HepG2 (cell line): ENCODE measurements at regions of chr10 and their contacts with region 1.

Region 1: DNA sequence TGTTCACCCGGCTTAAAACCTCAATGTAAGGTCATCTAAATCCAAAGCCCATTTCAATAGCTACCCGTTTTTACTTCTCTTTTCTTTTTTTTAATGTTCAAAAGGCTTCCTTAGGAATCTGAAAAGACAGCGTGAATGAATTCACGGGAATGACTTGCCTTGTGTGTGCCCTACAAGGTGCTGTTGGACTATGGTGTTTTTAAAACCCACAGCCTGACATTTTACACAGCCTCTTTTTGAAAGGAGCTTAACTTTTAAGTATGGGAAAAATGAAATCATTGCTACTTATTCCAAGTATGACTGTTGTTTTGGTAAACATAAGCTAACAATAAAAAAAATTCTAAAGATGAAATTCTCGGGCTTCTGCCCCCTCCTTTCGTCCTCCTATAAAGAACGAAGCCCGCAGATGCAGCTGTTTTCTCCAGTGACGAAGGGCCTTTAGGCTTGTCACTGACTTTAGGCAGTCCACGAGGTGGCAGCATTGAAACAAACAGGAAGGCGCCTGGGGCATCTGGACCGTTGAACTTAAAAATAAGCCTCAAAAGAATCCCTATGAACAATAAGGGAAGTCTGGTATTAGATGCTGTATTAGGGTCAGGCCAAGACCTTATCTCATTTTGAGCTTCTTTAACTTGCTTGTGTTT is 141.3 kb downstream of the NRP1 start:
- DNase-seq: peak; percentile 80
- ATAC-seq: peak; percentile 12; the same call in 1 of the 3 replicates
- H3K4me3 ChIP-seq: no peak overlapping the region
- H3K27ac ChIP-seq: no peak overlapping the region
- H3K4me1 ChIP-seq: peaks cover 53% of the 10 kb centered on the region
- H3K27me3 ChIP-seq: no peaks in the 10 kb centered on the region
- CTCF ChIP-seq: peak; percentile 85
- EP300 ChIP-seq: no peak
- POLR2A ChIP-seq: no peak
- RAD21 ChIP-seq: peak; percentile 73

Region 2: DNA sequence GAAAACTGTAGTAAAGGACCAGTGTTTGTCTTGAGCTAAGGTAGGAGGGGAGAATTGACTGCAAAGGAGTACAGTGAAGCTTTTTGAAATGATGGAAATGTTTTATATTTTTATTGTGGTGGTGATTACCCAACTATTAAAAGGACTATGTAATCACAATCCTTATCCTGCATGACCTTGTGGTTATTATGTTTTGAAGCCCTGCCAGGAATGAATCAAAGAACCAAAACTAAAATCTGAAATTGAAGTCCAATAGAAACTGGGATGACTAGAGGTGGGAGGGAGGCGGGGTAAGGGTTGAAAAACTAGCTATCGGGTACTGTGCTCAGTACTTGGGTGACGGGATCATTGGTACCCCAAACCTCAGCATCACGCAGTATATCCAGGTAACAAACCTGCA is 739.0 kb before region 1 on chr10:
- CTCF ChIA-PET with region 1: no interaction called
- POLR2A ChIA-PET with region 1: no interaction called
- in situ Hi-C with region 1: no loop called
- intact Hi-C with region 1: no loop called
- DNase-seq: no peak
- ATAC-seq: no peak
- H3K4me3 ChIP-seq: no peak overlapping the region
- H3K27ac ChIP-seq: no peak overlapping the region
- H3K4me1 ChIP-seq: no peaks in the 10 kb centered on the region
- H3K27me3 ChIP-seq: no peaks in the 10 kb centered on the region
- CTCF ChIP-seq: no peak
- EP300 ChIP-seq: no peak
- POLR2A ChIP-seq: no peak
- RAD21 ChIP-seq: no peak

Region 3: DNA sequence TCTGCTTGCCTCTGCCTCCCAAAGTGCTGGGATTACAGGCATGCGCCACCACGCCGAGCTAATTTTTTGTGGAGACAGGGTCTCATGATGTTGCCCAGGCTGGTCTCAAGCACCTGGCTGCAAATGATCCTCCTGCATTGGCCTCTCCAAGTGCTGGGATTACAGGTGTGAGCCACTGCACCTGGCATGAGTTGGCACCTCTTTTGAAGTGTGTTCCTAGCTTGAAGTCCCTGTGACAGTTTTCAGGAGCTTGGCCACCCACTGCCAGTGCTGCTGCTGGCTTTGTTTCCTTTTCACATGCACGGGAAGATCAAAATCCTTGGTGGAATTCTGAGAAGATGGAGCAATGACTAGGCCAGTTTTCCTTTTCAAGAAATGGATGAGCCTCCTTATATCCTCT is 15.0 kb after region 1 on chr10:
- CTCF ChIA-PET with region 1: no interaction called
- POLR2A ChIA-PET with region 1: interaction called, 10 read pairs
- in situ Hi-C with region 1: no loop called
- intact Hi-C with region 1: no loop called
- DNase-seq: no peak
- ATAC-seq: no peak
- H3K4me3 ChIP-seq: no peak overlapping the region
- H3K27ac ChIP-seq: no peak overlapping the region
- H3K4me1 ChIP-seq: no peaks in the 10 kb centered on the region
- H3K27me3 ChIP-seq: no peaks in the 10 kb centered on the region
- CTCF ChIP-seq: no peak
- EP300 ChIP-seq: no peak
- POLR2A ChIP-seq: no peak
- RAD21 ChIP-seq: no peak

Region 4: DNA sequence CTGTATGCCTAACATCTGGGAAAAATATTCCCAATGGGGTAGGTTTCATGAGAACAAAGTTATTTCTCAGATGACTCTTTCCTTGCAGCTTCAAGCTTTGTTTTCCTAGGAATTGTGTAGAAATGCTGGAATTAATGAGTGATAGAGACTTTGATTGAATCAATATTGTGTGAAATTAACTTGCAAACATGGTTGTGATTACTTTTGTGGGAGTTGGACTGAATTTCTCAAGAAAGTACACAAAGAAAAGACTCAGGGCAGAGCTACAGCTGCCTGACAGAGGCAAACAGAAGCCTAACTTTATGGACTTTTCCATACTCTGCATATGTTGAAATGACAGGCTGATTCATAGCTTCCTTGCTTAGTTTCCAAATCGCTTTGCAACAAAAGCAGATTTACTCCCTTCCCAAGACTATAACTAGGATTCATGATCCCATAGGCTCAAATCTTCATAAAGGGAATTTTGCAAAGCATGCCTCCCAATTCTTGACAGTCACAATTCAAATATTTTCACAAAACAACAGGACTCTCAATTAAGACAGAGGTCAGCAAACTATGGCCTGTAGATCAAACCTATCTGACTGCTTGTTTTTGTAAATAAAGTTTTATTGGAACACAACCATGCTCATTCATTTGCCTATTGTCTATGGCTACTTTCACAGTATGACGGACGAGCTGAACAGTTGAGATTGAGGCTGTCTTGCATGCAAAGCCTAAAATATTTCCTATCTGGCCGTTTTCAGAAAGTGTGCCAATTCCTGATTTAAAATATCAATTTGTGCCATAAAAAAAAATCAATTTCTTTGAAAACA is 113.7 kb after region 1 on chr10:
- CTCF ChIA-PET with region 1: no interaction called
- POLR2A ChIA-PET with region 1: interaction called, 6 read pairs
- in situ Hi-C with region 1: no loop called
- intact Hi-C with region 1: loop called (anchors 5 kb)
- DNase-seq: peak; percentile 77
- ATAC-seq: peak; percentile 87
- H3K4me3 ChIP-seq: peak overlapping the region in 1 of 3 experiments; percentile 5; a peak in 1 of 6 replicates
- H3K27ac ChIP-seq: peak overlapping the region; percentile 47
- H3K4me1 ChIP-seq: peaks cover 32% of the 10 kb centered on the region
- H3K27me3 ChIP-seq: no peaks in the 10 kb centered on the region
- CTCF ChIP-seq: no peak
- EP300 ChIP-seq: peak in 1 of 2 experiments; percentile 68; a peak in 2 of 4 replicates
- POLR2A ChIP-seq: no peak
- RAD21 ChIP-seq: no peak

Region 5: GRCh38 chr10:33509231-33509831 is 316.2 kb after region 1 on chr10:
- CTCF ChIA-PET with region 1: no interaction called
- POLR2A ChIA-PET with region 1: interaction called, 4 read pairs
- in situ Hi-C with region 1: loop called (anchors 5 kb)
- intact Hi-C with region 1: loop called (anchors 5 kb)
- DNase-seq: peak; percentile 92
- ATAC-seq: peak; percentile 90
- H3K4me3 ChIP-seq: peak overlapping the region; percentile 20 to 55 (median 40); a peak in 5 of 6 replicates
- H3K27ac ChIP-seq: peak overlapping the region; percentile 93
- H3K4me1 ChIP-seq: peaks cover 37% of the 10 kb centered on the region
- H3K27me3 ChIP-seq: no peaks in the 10 kb centered on the region
- CTCF ChIP-seq: no peak
- EP300 ChIP-seq: peak; percentile 85 to 90
- POLR2A ChIP-seq: peak in 1 of 2 experiments; percentile 33; a peak in 1 of 4 replicates
- RAD21 ChIP-seq: no peak

Region 6: DNA sequence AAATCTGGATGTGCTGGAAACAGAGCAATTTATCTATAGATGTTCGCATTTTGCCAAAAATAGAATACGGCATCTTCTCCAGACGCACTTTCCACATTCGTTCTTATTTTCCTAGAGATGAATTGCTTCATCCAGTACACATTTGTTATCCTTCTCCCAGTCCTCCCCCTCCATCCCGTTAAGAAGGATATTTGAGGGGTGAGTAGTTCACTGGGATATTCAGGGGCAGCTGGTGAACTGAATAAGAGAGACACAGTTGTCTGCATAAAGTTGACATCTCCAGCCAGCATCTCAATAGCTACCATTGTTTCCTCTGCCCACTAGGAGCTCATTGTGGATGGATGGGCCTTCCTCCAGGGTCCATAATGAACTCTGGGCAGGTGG is 598.1 kb after region 1 on chr10:
- CTCF ChIA-PET with region 1: no interaction called
- POLR2A ChIA-PET with region 1: no interaction called
- in situ Hi-C with region 1: no loop called
- intact Hi-C with region 1: no loop called
- DNase-seq: peak; percentile 13
- ATAC-seq: no peak
- H3K4me3 ChIP-seq: no peak overlapping the region
- H3K27ac ChIP-seq: no peak overlapping the region
- H3K4me1 ChIP-seq: peaks cover 20% of the 10 kb centered on the region
- H3K27me3 ChIP-seq: no peaks in the 10 kb centered on the region; a peak in 1 of 5 replicates
- CTCF ChIP-seq: no peak
- EP300 ChIP-seq: no peak
- POLR2A ChIP-seq: no peak
- RAD21 ChIP-seq: no peak

Region 7: GRCh38 chr10:34121781-34122628 is 928.8 kb after region 1 on chr10:
- CTCF ChIA-PET with region 1: no interaction called
- POLR2A ChIA-PET with region 1: interaction called, 3 read pairs
- in situ Hi-C with region 1: no loop called
- intact Hi-C with region 1: loop called (anchors 10 kb)
- DNase-seq: peak; percentile 71
- ATAC-seq: peak; percentile 73
- H3K4me3 ChIP-seq: peak overlapping the region; percentile 3 to 44 (median 24); a peak in 2 of 6 replicates
- H3K27ac ChIP-seq: peak overlapping the region; percentile 90
- H3K4me1 ChIP-seq: peaks cover 68% of the 10 kb centered on the region
- H3K27me3 ChIP-seq: no peaks in the 10 kb centered on the region
- CTCF ChIP-seq: no peak
- EP300 ChIP-seq: no peak
- POLR2A ChIP-seq: no peak
- RAD21 ChIP-seq: no peak